ENCODE measurements at regions of chr17 and their contacts with region 1.

Region 1: GRCh38 chr17:16537130-16537458 is 31.9 kb downstream of the ZNF287 start:
- DNase-seq: no peak
- ATAC-seq: no peak
- H3K4me3 ChIP-seq: peak overlapping the region in 1 of 12 donors; percentile 73
- H3K27ac ChIP-seq: peak overlapping the region in 5 of 12 donors; percentile 19 to 93 (median 91)
- H3K4me1 ChIP-seq: peaks cover 0 to 9% (median 4%) of the 10 kb centered on the region in 12 donors
- H3K27me3 ChIP-seq: no peaks in the 10 kb centered on the region
- CTCF ChIP-seq: no peak
- POLR2A ChIP-seq: no peak

Region 2: GRCh38 chr17:16438557-16439302 is 98.4 kb before region 1 on chr17:
- intact Hi-C with region 1: loop called in 1 of 10 experiments (anchors 5 kb)
- DNase-seq: peak; percentile 94 to 97 (median 96)
- ATAC-seq: peak; percentile 92 to 97 (median 95)
- H3K4me3 ChIP-seq: peak overlapping the region; percentile 71 to 100 (median 86)
- H3K27ac ChIP-seq: peak overlapping the region; percentile 34 to 93 (median 86)
- H3K4me1 ChIP-seq: peaks cover 6 to 43% (median 28%) of the 10 kb centered on the region in 12 donors
- H3K27me3 ChIP-seq: no peaks in the 10 kb centered on the region
- CTCF ChIP-seq: no peak
- POLR2A ChIP-seq: peak in 1 of 2 donors; percentile 64

Region 3: DNA sequence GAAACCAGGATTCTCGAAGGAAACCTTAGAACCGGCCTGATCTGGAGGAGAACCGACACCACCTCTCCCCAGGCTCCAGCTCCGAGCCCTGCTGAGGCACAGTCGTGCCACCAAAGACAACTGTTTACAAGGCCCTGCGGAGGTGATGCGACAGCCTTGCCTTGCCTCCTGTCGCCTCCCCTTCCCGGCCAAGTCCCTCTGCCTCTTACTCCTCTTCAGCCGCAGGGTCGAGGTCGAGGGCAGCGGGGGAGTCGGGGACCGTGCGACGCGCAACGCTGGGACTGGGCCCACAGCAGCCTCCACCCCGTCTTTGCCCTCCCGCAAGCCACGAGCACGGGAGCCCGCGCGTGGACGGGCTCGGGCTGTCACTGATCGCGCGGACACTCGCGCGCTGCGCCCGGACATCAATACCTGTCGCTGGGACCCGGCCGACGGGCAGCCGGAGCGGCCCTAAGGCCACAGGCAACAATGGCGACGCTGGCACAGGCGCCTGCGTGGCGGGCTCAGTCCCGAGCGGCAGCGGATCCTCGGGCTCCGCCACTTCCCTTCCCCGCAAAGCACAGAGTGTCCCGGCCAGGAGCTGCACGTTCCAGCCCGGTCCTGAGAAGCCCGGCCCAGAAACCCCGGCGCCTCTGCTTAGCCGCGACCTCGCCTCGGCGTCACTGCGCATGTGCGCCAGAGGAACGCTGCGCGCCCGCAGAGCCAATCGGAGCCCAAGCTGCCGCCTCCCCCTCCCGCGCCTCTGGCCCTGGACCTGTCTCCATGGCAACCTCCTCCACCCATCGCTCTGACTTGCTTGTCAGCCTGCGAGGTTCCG is 31.7 kb after region 1 on chr17 and contains the start of gene ZNF287:
- intact Hi-C with region 1: loop called in 2 of 10 experiments (anchors 2 kb)
- DNase-seq: peak; percentile 95 to 97 (median 96)
- ATAC-seq: peak; percentile 92 to 100 (median 100)
- H3K4me3 ChIP-seq: peak within 1 kb of the TSS; percentile 54 to 89 (median 79)
- H3K27ac ChIP-seq: peak within 1 kb of the TSS in 11 of 12 donors; percentile 46 to 89 (median 73)
- H3K4me1 ChIP-seq: peaks cover 0 to 15% (median 9%) of the 10 kb centered on the region in 12 donors
- H3K27me3 ChIP-seq: no peaks in the 10 kb centered on the region
- CTCF ChIP-seq: no peak
- POLR2A ChIP-seq: peak in 1 of 2 donors; percentile 72
- total RNA-seq, gene ZNF287: 3.8 to 14.7 (median 10.2) TPM

Region 4: DNA sequence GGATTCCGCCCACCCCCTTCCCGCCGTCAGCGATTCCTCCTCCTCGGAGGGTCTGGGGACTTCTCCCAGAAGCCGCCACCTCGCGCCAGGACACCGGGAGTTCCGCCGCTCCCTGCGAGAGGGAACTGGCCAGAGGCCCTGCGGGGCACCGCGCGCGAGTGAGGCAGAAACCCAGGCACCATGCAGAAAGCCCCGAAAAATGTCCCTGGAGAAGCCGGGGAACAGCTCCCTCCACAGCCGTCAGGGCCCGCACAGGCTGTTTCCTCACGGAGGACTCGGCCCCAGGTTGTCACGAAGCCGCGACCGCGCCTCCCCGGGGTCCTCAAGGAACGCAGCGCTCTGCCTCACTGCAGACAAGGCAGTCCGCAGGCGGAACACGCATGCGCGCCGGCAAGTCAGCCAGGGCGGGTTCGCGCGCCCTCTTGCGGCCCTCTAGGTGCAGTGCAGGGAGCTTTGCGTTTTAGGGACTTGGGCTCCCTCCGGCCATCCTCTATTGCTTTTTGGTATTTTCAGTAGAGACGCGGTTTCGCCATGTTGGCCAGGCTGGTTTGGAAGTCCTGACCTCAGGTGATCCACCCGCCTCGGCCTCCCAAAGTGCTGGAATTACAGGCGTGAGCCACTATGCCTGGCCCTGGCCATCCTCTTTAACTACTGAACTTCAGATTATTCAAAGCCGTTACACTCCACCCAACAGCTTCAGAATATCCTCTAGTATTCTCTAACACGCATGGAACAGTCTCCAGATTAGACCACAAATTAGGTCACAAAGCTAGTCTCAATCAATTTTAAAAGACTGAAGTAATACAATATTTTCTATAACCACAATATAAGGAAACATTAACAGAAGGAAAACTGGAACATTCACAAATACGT is 52.2 kb after region 1 on chr17:
- intact Hi-C with region 1: loop called in 9 of 10 experiments (anchors 1 to 5 kb)
- DNase-seq: peak; percentile 88 to 97 (median 91)
- ATAC-seq: peak; percentile 77 to 94 (median 90)
- H3K4me3 ChIP-seq: peak overlapping the region; percentile 44 to 84 (median 64)
- H3K27ac ChIP-seq: peak overlapping the region in 10 of 12 donors; percentile 35 to 80 (median 62)
- H3K4me1 ChIP-seq: peaks cover 0 to 14% (median 3%) of the 10 kb centered on the region in 12 donors
- H3K27me3 ChIP-seq: no peaks in the 10 kb centered on the region
- CTCF ChIP-seq: peak; percentile 98 to 100 (median 99)
- POLR2A ChIP-seq: peak in 1 of 2 donors; percentile 67

Region 5: GRCh38 chr17:16987830-16988601 is 450.9 kb after region 1 on chr17:
- intact Hi-C with region 1: loop called in 5 of 10 experiments (anchors 2 to 10 kb)
- DNase-seq: peak; percentile 74 to 86 (median 77)
- ATAC-seq: peak; percentile 47 to 83 (median 78)
- H3K4me3 ChIP-seq: peak overlapping the region in 1 of 12 donors; percentile 26
- H3K27ac ChIP-seq: peak overlapping the region in 3 of 12 donors; percentile 42 to 82 (median 53)
- H3K4me1 ChIP-seq: peaks cover 0 to 30% (median 6%) of the 10 kb centered on the region in 12 donors
- H3K27me3 ChIP-seq: no peaks in the 10 kb centered on the region
- CTCF ChIP-seq: no peak
- POLR2A ChIP-seq: no peak